Left cardiac atrium (tissue), 4 donors: ENCODE measurements at regions of chr11 and their contacts with region 1.

Region 1: DNA sequence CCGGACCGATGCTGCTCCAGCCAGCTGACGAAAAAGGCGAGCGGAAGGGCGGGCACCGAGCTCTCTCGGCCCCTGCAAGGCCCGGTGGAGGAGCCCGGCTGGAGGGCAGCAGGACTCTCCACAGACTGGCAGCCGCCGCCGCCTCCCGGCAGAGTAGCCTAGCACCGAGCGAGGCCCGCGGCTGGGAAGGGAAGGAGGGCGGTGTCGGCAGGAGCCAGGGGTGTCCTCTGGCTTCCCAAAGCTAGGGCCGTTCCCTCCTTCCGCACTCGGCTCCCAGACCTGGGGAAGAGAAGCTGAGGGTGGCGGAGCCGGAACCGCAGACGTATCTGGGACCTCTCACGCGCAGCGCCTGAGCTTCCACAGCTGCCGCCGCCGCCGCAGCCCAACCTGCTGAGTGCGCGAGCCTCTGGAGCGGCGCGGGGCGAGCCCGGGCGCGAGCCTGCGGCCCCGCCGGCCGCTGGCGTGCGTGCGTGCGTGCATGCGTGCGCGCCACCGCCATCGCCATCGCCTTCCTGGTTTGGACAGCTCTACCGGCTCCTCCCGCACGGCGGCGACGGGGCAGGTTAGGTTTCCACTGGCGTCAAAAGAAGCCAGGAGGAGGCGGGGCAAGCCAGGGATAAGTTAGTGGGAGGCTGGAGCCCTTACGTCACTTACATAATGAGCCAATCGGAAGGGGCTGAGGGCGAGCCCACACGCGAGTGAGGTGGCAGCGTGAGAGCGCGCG is at the start of gene RAB6A:
- DNase-seq: peak; percentile 100
- ATAC-seq: peak; percentile 95 to 96
- total RNA-seq, gene RAB6A: 100 to 134 TPM

Region 2: DNA sequence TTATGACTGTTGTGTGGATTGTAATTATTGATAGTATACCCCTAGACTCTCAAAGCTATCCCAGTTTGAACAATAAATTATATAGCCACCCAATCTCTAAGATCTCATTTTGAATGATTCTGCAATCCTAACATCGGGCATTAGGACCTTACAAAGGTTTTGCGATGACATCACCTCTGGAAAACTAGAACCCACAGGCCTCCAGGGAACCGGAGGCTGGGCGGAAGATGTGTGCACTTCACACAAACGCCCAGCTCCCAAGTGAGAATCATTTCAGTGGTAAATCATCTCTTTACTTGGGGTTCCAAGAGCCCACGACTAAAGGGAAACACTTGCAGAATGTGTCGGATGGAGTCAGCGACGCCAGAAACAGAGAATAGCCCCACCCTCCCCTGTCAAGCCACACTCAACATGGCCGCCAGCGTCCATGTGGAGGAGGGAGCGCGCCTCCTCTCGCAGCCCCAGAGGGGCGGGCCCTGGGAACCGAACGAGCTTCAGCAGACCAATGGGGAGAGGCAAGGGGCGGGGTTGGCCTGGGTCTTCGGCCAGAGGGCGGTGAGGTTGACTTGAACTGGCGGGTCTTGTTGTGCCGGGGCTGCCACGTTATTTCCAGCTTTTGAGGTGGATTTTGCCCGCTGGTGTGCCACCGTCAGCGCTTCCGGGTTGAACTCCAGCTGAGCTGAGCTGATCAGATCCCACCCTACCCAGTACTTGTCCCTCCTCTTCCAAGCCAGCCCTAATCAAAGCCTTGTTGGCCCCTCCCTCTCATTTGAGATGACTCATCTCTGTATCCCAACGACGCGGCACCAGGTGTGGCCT is 18.5 kb after region 1 on chr11:
- intact Hi-C with region 1: loop called in 1 of 2 experiments (anchors 1 kb)
- DNase-seq: peak; percentile 99
- ATAC-seq: peak; percentile 100